ENCODE measurements at regions of chr9 and their contacts with region 1.

Region 1: DNA sequence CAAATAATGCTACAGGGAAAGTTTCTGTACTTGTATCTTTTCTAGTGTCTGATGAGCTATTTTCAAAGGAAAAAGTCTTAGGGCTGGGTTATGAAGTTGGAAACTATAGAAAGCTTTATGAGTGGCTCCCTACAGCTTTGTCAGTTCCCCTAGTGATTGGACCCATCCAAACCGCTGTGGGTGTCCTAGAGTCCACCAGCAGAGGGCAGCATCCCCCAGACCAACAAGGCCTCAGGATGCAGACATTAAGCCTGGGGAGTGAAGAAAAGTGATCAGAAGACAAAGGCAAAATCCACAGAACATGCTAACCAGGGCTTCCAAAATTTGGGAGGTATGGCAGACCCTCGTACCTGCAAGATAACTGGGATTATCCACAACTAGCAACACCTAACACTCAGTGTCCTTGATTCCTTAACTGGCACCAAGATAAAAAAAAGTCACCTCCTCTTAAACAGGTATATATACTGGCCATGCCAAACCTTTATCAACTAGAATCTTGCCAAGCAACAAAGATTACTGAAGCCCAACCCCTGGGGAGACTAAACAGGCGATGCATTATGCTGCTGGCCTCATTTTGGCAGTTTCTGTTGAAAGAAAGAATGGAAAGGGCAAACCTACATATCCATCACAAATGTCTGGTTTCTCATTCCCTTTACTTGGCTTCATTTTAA is 110.4 kb upstream of the NR5A1 start:
- DNase-seq: peak; percentile 56
- ATAC-seq: peak; percentile 79
- H3K4me3 ChIP-seq: no peak overlapping the region
- H3K27ac ChIP-seq: no peak overlapping the region
- H3K4me1 ChIP-seq: peaks cover 15% of the 10 kb centered on the region; the same call in 1 of the 2 replicates
- H3K27me3 ChIP-seq: no peaks in the 10 kb centered on the region
- CTCF ChIP-seq: peak; percentile 90 to 95 (median 94); a peak in 5 of 6 replicates
- EP300 ChIP-seq: no peak
- POLR2A ChIP-seq: no peak
- RAD21 ChIP-seq: peak; percentile 99

Region 2: DNA sequence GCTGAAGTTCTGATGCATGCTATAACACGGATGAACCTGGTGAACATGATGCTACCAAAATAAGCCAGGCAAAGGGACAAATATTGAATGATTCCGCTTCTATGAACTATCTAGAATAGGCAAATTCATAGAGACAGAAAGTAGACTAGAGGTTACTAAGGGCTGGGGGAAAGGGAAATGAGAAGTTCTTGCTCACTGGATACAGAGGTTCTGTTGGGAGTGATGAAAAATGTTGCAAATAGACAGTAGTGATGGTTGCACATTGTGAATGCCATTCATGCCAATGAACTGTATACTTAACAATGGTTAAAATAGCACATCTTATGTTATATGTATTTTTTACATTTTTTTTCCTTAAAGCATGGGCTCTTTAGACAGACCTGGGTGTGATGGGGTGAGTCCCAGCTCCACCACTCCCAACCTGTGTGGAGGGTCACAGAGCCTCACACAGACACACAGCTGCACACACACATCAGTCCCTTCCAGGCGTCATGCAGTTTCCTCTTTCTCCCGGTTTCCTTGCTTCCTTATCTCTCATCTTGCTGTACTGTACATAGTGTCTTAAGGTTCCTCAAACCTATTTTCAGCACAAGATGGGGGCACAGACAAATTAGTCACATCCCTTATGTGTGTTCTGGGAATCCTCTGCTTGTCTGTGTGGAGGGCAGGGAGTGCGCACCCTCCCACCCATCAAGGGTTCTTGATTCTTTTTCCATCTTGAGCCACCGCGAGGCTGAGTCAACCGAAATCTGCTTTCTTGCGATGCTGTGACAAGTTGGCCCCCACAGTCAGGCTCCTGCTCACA is 1068.7 kb before region 1 on chr9:
- CTCF ChIA-PET with region 1: no interaction called
- POLR2A ChIA-PET with region 1: no interaction called
- RAD21 ChIA-PET with region 1: no interaction called
- SMC1A ChIA-PET with region 1: no interaction called
- in situ Hi-C with region 1: no loop called
- intact Hi-C with region 1: no loop called
- DNase-seq: no peak
- ATAC-seq: no peak
- H3K4me3 ChIP-seq: no peak overlapping the region
- H3K27ac ChIP-seq: no peak overlapping the region
- H3K4me1 ChIP-seq: no peaks in the 10 kb centered on the region
- H3K27me3 ChIP-seq: no peaks in the 10 kb centered on the region
- CTCF ChIP-seq: no peak
- EP300 ChIP-seq: no peak
- POLR2A ChIP-seq: no peak
- RAD21 ChIP-seq: no peak

Region 3: DNA sequence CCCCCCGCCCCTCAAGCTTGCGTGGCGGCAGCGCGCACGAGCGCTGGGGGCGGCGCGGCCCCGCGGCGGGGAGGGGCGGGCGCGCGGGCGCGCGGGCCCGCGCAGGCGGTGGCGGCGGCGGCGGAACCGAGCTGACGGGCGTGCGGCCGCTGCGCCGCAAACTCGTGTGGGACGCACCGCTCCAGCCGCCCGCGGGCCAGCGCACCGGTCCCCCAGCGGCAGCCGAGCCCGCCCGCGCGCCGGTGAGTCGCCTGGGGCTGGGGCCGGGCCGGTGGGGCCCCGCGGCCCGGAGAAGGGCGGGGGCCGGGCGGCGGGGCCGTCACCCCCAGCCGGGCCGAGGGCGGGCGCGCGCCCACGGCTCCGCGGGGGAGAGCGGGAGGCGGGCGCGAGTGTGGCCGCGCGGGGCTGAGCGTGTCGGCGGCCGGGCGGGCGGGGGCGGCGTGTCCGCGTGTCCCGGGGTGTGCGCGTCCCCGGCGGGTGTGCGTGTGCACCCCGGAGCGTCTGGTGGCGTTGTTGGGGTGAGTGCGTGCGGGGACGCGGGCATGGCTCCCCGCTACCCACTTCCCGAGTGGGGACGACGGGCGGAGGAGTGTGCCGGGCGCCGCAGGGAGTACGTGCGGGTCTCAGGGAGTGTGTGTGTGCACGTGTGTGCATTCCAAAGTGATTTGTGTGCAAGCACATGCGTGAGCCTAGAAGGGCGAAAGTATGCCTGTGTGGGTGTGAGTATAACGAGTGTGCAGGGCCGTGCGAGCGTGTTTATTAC is 359.6 kb before region 1 on chr9 and contains the start of gene NEK6:
- CTCF ChIA-PET with region 1: no interaction called
- POLR2A ChIA-PET with region 1: no interaction called
- RAD21 ChIA-PET with region 1: no interaction called
- SMC1A ChIA-PET with region 1: no interaction called
- in situ Hi-C with region 1: no loop called
- intact Hi-C with region 1: no loop called
- DNase-seq: no peak
- ATAC-seq: peak; percentile 2
- H3K4me3 ChIP-seq: peak within 1 kb of the TSS; percentile 95
- H3K27ac ChIP-seq: peak within 1 kb of the TSS; percentile 88
- H3K4me1 ChIP-seq: peaks cover 35% of the 10 kb centered on the region
- H3K27me3 ChIP-seq: no peaks in the 10 kb centered on the region
- CTCF ChIP-seq: no peak
- EP300 ChIP-seq: no peak
- POLR2A ChIP-seq: peak; percentile 72
- RAD21 ChIP-seq: no peak
- polyA plus RNA-seq, gene NEK6: 31.3 to 33.2 TPM

Region 4: GRCh38 chr9:124415102-124415851 is 202.3 kb before region 1 on chr9 and contains the start of gene PSMB7:
- CTCF ChIA-PET with region 1: interaction called, 7 read pairs
- POLR2A ChIA-PET with region 1: no interaction called
- RAD21 ChIA-PET with region 1: interaction called, 5 read pairs
- SMC1A ChIA-PET with region 1: interaction called, 5 read pairs
- in situ Hi-C with region 1: no loop called
- intact Hi-C with region 1: loop called (anchors 5 kb)
- DNase-seq: peak; percentile 87
- ATAC-seq: peak; percentile 90
- H3K4me3 ChIP-seq: peak within 1 kb of the TSS; percentile 90
- H3K27ac ChIP-seq: peak within 1 kb of the TSS; percentile 54
- H3K4me1 ChIP-seq: peaks cover 9% of the 10 kb centered on the region
- H3K27me3 ChIP-seq: no peaks in the 10 kb centered on the region
- CTCF ChIP-seq: peak; percentile 86 to 93 (median 86)
- EP300 ChIP-seq: peak in 1 of 2 experiments; percentile 29; a peak in 1 of 4 replicates
- POLR2A ChIP-seq: peak; percentile 81
- RAD21 ChIP-seq: no peak
- polyA plus RNA-seq, gene PSMB7: 441 to 564 TPM

Region 5: GRCh38 chr9:124629600-124629999 is 12.0 kb after region 1 on chr9:
- CTCF ChIA-PET with region 1: interaction called, 30 read pairs
- POLR2A ChIA-PET with region 1: interaction called, 6 read pairs
- RAD21 ChIA-PET with region 1: interaction called, 7 read pairs
- SMC1A ChIA-PET with region 1: interaction called, 10 read pairs
- in situ Hi-C with region 1: no loop called
- intact Hi-C with region 1: no loop called
- DNase-seq: no peak
- ATAC-seq: peak; percentile 46; the same call in 2 of the 3 replicates
- H3K4me3 ChIP-seq: no peak overlapping the region
- H3K27ac ChIP-seq: no peak overlapping the region
- H3K4me1 ChIP-seq: no peaks in the 10 kb centered on the region
- H3K27me3 ChIP-seq: no peaks in the 10 kb centered on the region
- CTCF ChIP-seq: no peak
- EP300 ChIP-seq: no peak
- POLR2A ChIP-seq: no peak
- RAD21 ChIP-seq: no peak

Region 6: DNA sequence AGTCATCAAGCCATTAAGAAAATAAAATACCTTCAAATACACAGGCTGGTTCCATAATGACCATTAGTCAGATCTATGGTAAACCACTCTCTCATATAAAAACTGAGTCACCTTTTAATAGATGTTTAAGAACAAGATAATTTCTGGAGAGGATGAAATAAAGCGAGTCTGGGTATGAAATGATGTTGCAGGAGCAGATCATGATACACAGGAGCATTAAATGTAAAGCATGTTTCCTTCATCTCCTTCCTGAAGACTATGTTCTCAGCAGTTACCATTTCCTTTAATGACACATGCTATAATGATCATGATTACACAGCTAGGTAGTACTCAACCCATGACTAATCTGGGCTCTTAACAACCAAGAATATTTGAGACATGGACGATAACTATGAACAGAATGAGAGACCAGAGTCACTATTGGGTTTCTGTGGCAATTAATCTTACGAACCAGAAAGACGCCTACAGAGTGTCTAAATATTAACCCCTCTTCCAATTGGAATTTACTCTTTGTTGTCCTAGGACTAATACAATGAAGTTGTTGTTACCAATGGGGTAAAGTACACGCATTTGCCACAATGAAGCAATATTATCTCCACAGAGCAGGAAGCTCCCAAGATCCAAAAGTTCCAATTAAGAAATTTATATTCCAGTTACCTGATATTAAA is 47.9 kb after region 1 on chr9:
- CTCF ChIA-PET with region 1: interaction called, 95 read pairs
- POLR2A ChIA-PET with region 1: interaction called, 146 read pairs
- RAD21 ChIA-PET with region 1: interaction called, 172 read pairs
- SMC1A ChIA-PET with region 1: interaction called, 160 read pairs
- in situ Hi-C with region 1: no loop called
- intact Hi-C with region 1: no loop called
- DNase-seq: no peak
- ATAC-seq: peak; percentile 12; the same call in 2 of the 3 replicates
- H3K4me3 ChIP-seq: no peak overlapping the region
- H3K27ac ChIP-seq: no peak overlapping the region
- H3K4me1 ChIP-seq: no peaks in the 10 kb centered on the region
- H3K27me3 ChIP-seq: no peaks in the 10 kb centered on the region
- CTCF ChIP-seq: no peak
- EP300 ChIP-seq: no peak
- POLR2A ChIP-seq: no peak
- RAD21 ChIP-seq: no peak

Region 7: DNA sequence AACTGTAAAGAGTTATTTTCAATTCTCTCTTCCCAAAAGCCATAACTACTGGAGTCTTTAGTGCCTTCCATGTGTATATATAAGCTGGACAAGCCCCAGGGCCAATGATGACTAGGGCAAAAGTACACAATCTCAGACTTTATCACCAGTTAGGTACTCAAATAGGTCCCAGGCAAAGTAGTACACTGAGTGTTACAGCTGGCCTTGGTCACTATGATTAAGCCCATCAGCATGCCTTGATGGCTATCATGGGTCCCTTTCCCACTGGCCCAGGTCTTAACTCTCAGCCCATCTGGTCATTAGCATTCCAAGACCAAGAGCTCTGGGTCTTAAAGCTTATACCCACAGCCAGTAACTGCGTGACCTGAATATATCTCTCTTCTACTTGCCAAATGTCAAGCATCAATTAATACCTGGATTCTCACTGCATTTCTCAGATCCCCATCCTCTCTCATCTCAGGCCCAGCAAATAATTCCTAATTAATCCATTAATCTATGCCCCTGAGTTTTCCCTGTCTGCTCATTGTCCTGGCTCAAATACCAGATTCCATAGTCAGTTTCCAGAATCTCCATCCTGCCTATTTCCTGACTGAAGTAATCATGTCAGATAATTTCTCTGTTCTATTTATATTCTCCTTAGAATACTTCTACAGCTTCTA is 91.2 kb after region 1 on chr9:
- CTCF ChIA-PET with region 1: interaction called, 424 read pairs
- POLR2A ChIA-PET with region 1: interaction called, 6 read pairs
- RAD21 ChIA-PET with region 1: interaction called, 231 read pairs
- SMC1A ChIA-PET with region 1: interaction called, 320 read pairs
- in situ Hi-C with region 1: loop called (anchors 5 kb)
- intact Hi-C with region 1: loop called (anchors 1 kb)
- DNase-seq: no peak
- ATAC-seq: no peak
- H3K4me3 ChIP-seq: no peak overlapping the region
- H3K27ac ChIP-seq: no peak overlapping the region
- H3K4me1 ChIP-seq: no peaks in the 10 kb centered on the region; the same call in 1 of the 2 replicates
- H3K27me3 ChIP-seq: no peaks in the 10 kb centered on the region
- CTCF ChIP-seq: no peak
- EP300 ChIP-seq: no peak
- POLR2A ChIP-seq: no peak
- RAD21 ChIP-seq: no peak

Region 8: GRCh38 chr9:124771021-124771866 is 153.6 kb after region 1 on chr9 and contains the start of gene NR6A1:
- CTCF ChIA-PET with region 1: interaction called, 181 read pairs
- POLR2A ChIA-PET with region 1: interaction called, 12 read pairs
- RAD21 ChIA-PET with region 1: interaction called, 86 read pairs
- SMC1A ChIA-PET with region 1: interaction called, 92 read pairs
- in situ Hi-C with region 1: no loop called
- intact Hi-C with region 1: no loop called
- DNase-seq: peak; percentile 92
- ATAC-seq: peak; percentile 88
- H3K4me3 ChIP-seq: peak within 1 kb of the TSS; percentile 97
- H3K27ac ChIP-seq: peak within 1 kb of the TSS; percentile 86
- H3K4me1 ChIP-seq: peaks cover 21% of the 10 kb centered on the region
- H3K27me3 ChIP-seq: no peaks in the 10 kb centered on the region
- CTCF ChIP-seq: peak in 2 of 3 experiments; percentile 19 to 22; a peak in 3 of 6 replicates
- EP300 ChIP-seq: no peak
- POLR2A ChIP-seq: peak; percentile 64
- RAD21 ChIP-seq: no peak
- polyA plus RNA-seq, gene NR6A1: 1.2 to 2.5 TPM